AG04449 (cell line): ENCODE measurements at regions of chr22 and their contacts with region 1.

Region 1: DNA sequence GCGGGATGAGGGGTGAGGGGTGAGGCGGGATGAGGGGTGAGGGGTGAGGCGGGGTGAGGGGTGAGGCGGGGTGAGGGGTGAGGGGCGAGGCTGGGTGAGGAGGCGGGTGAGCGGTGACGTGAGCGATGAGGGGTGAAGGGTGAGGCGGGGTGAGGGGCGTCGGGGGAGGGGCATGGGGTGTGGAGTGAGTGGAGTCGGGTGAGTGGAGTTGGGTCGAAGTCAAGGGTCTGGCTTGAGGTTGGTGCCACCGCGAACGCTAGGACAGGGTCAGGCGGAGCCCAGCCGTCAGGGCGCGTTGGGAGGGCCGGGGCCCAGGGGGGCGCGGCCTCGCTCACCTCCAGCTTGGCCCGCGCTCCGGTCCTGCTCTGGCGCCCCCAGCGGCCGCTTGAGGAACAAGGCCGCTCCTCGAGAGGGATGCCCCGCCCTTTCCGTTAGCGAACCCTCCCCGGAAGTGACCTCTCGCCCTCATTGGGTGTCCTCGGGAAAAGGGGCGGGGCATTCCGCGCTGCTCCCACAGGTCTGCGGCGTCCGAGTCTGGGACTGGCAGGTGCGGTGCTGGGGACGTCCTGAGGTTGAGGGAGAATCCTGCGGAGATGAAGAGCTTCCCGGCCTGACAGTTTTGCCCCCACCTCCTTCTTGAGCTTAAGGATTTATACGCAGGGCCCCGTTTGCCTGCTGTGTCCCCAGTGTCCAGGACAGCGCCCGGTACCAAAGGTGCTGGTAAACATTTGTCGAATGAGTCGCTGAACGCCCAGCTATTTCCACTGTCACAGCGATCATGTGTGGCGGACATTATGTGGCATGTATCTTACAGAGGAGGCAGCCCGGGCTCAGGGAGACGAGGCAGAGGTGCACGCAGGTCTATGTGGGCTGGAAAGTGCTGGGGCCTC is at the start of gene SYCE3:
- DNase-seq: peak; percentile 28
- H3K4me3 ChIP-seq: peak within 1 kb of the TSS; percentile 67
- CTCF ChIP-seq: peak; percentile 91

Region 2: DNA sequence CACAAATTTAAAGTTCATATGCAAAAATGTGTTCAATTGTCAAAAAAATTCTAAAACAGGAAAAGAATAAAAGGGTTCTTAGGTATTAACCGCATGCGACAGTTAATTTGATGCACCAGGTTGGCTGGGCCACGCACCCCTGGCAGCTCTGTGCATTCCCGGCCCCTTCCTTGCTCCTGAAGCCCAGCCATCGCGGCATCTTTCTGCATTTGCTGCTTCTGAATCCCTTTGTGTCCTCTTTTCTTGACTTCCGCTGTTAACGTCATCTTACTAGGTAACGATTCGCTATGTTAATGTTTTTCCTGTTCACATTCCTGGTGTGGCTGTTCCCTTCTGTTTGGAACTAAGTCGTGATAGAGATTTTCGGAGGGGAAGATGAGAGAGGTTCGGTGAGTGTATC is 25.0 kb before region 1 on chr22:
- CTCF ChIA-PET with region 1: interaction called, 22 read pairs
- POLR2A ChIA-PET with region 1: no interaction called
- DNase-seq: no peak
- H3K4me3 ChIP-seq: no peak overlapping the region
- CTCF ChIP-seq: no peak

Region 3: GRCh38 chr22:50544078-50544745 is 18.6 kb before region 1 on chr22:
- CTCF ChIA-PET with region 1: interaction called, 22 read pairs
- POLR2A ChIA-PET with region 1: interaction called, 3 read pairs
- DNase-seq: no peak
- H3K4me3 ChIP-seq: peak overlapping the region; percentile 27
- CTCF ChIP-seq: peak; percentile 77

Region 4: GRCh38 chr22:50576070-50576469 is 13.3 kb after region 1 on chr22:
- CTCF ChIA-PET with region 1: interaction called, 124 read pairs
- POLR2A ChIA-PET with region 1: no interaction called
- DNase-seq: no peak
- H3K4me3 ChIP-seq: no peak overlapping the region
- CTCF ChIP-seq: peak; percentile 25

Region 5: GRCh38 chr22:50582562-50583293 is 20.0 kb after region 1 on chr22 and contains the start of gene CHKB:
- CTCF ChIA-PET with region 1: interaction called, 124 read pairs
- POLR2A ChIA-PET with region 1: no interaction called
- DNase-seq: peak; percentile 66
- H3K4me3 ChIP-seq: peak within 1 kb of the TSS; percentile 87
- CTCF ChIP-seq: no peak